Sigmoid colon (tissue), 7 donors: ENCODE measurements at regions of chr1 and their contacts with region 1.

Region 1: GRCh38 chr1:54810100-54810942 is 9.2 kb upstream of the TTC22 start:
- DNase-seq: no peak
- H3K4me3 ChIP-seq: no peak overlapping the region
- H3K27ac ChIP-seq: no peak overlapping the region
- H3K4me1 ChIP-seq: peaks cover 0 to 5% (median 4%) of the 10 kb centered on the region in 4 donors
- H3K27me3 ChIP-seq: peaks cover 0 to 4% (median 0%) of the 10 kb centered on the region in 3 donors
- CTCF ChIP-seq: peak; percentile 62 to 84 (median 78)
- EP300 ChIP-seq: no peak
- POLR2A ChIP-seq: no peak

Region 2: DNA sequence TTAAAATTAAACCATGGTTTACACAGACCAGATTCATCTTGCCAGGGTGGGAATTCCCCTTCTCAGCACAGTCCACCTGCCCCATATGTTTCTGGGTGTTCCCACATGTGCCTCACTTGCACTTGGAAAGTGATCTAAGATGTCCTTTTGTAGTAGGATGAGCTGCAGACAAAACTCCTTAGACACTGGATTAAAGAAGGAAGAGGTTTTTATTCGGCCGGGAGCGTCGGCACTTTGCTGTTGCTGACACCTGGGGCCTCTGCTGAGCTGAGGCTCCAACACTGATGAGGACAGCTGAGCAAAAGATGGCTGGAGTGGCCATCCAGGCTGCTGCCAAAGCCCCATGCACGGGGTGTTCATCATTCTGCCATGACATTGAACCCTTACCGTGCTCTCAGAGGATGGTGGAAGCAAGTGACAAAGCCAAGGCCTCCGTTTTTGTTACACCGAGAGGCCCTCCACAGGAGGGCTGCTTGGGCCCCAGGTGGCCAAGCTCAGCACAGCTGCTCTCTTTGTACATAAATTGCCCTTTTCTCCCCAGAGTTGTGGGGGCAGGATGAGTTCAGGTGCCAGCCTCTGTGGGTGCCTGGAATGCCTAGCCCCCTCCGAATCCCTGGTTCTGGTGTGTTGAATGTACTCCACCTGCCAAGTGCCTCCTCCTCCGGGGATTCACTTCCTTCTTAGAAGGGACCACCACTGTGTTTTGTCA is 269.6 kb before region 1 on chr1:
- intact Hi-C with region 1: no loop called
- DNase-seq: no peak
- H3K4me3 ChIP-seq: no peak overlapping the region
- H3K27ac ChIP-seq: peak overlapping the region in 1 of 4 donors; percentile 85
- H3K4me1 ChIP-seq: peaks cover 0 to 23% (median 22%) of the 10 kb centered on the region in 4 donors
- H3K27me3 ChIP-seq: no peaks in the 10 kb centered on the region
- CTCF ChIP-seq: no peak
- EP300 ChIP-seq: no peak
- POLR2A ChIP-seq: no peak

Region 3: GRCh38 chr1:54671985-54672608 is 138.2 kb before region 1 on chr1:
- intact Hi-C with region 1: loop called (anchors 5 kb)
- DNase-seq: no peak
- H3K4me3 ChIP-seq: no peak overlapping the region
- H3K27ac ChIP-seq: no peak overlapping the region
- H3K4me1 ChIP-seq: no peaks in the 10 kb centered on the region
- H3K27me3 ChIP-seq: no peaks in the 10 kb centered on the region
- CTCF ChIP-seq: peak; percentile 17 to 83 (median 67)
- EP300 ChIP-seq: no peak
- POLR2A ChIP-seq: no peak